ENCODE measurements at regions of chr10 and their contacts with region 1.

Region 1: DNA sequence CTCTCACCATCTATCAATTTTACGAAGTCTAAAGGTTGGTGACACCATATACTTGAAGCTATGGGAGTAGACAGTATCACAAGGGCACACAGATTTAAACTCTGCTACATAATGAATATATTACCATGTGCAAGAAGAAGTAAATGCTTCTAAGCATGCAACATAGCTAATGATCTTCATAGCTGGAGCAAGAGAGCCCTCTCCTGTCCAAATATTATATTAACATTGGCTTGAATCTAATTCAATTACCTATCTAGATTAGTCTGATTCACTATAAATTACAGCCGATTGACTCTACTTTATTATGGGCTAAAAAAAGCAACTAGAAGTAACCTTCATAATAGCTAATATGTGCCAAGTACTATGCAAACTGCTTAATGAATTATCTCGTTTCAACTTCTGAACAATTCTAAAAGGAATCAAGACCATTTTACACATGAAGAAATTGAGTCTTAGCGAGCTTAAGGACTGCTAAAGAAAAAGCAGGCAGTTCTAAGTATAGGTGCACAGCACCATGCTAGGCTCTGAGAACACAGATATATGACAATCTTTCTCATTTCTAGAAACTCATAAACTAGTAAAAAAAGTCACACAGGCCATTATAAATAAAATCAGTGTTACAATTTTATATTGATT is 21.9 kb downstream of the FRA10AC1 start:
- DNase-seq: no peak
- ATAC-seq: peak; percentile 95 to 97 (median 95)
- H3K4me3 ChIP-seq: no peak overlapping the region
- H3K27ac ChIP-seq: no peak overlapping the region
- H3K4me1 ChIP-seq: peaks cover 0 to 15% (median 0%) of the 10 kb centered on the region in 4 donors
- H3K27me3 ChIP-seq: no peaks in the 10 kb centered on the region
- CTCF ChIP-seq: peak; percentile 49 to 77 (median 60)
- POLR2A ChIP-seq: no peak

Region 2: GRCh38 chr10:93554760-93555432 is 125.6 kb before region 1 on chr10:
- intact Hi-C with region 1: loop called in 1 of 2 experiments (anchors 10 kb)
- DNase-seq: peak; percentile 80 to 84 (median 81)
- ATAC-seq: peak; percentile 90 to 98 (median 97)
- H3K4me3 ChIP-seq: no peak overlapping the region
- H3K27ac ChIP-seq: no peak overlapping the region
- H3K4me1 ChIP-seq: peaks cover 0 to 6% (median 0%) of the 10 kb centered on the region in 4 donors
- H3K27me3 ChIP-seq: no peaks in the 10 kb centered on the region
- CTCF ChIP-seq: peak; percentile 69 to 82 (median 78)
- POLR2A ChIP-seq: no peak

Region 3: GRCh38 chr10:93615576-93616235 is 64.8 kb before region 1 on chr10:
- intact Hi-C with region 1: no loop called
- DNase-seq: no peak
- ATAC-seq: peak in 3 of 4 donors; percentile 23 to 42 (median 26)
- H3K4me3 ChIP-seq: no peak overlapping the region
- H3K27ac ChIP-seq: no peak overlapping the region
- H3K4me1 ChIP-seq: no peaks in the 10 kb centered on the region
- H3K27me3 ChIP-seq: no peaks in the 10 kb centered on the region
- CTCF ChIP-seq: no peak
- POLR2A ChIP-seq: no peak